ENCODE measurements at regions of chr11 and their contacts with region 1.

Region 1: GRCh38 chr11:64204464-64204989 is 2.0 kb upstream of the FERMT3 start:
- DNase-seq: peak; percentile 86 to 92
- ATAC-seq: peak; percentile 78 to 84 (median 80)
- H3K4me3 ChIP-seq: no peak overlapping the region
- H3K27ac ChIP-seq: peak overlapping the region; percentile 34
- H3K4me1 ChIP-seq: peaks cover 11% of the 10 kb centered on the region
- H3K27me3 ChIP-seq: no peaks in the 10 kb centered on the region
- CTCF ChIP-seq: peak; percentile 65

Region 2: DNA sequence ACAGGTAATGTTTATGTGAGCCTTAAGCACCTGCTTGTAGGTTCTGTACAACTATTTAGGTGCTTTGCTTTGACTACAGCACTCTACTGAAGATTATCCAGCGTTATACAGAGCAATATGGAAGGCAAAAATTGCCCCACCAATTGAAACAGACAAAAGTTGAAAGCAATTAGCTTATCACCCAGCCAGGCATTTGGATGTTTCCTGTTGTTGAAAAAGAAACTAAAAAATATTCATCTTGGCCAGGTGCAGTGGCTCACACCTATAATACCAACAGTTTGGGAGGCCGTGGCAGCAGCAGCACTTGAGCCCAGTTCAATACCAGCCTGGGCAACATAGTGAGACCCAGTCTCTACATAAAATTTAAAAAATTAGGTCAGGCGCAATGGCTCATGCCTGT is 551.9 kb before region 1 on chr11:
- intact Hi-C with region 1: no loop called
- DNase-seq: no peak
- ATAC-seq: no peak
- H3K4me3 ChIP-seq: no peak overlapping the region
- H3K27ac ChIP-seq: no peak overlapping the region
- H3K4me1 ChIP-seq: no peaks in the 10 kb centered on the region
- H3K27me3 ChIP-seq: no peaks in the 10 kb centered on the region
- CTCF ChIP-seq: no peak

Region 3: GRCh38 chr11:64058494-64058893 is 146.0 kb before region 1 on chr11:
- intact Hi-C with region 1: no loop called
- DNase-seq: no peak
- ATAC-seq: peak; percentile 41 to 74 (median 56)
- H3K4me3 ChIP-seq: no peak overlapping the region
- H3K27ac ChIP-seq: no peak overlapping the region
- H3K4me1 ChIP-seq: peaks cover 25% of the 10 kb centered on the region
- H3K27me3 ChIP-seq: no peaks in the 10 kb centered on the region
- CTCF ChIP-seq: no peak

Region 4: DNA sequence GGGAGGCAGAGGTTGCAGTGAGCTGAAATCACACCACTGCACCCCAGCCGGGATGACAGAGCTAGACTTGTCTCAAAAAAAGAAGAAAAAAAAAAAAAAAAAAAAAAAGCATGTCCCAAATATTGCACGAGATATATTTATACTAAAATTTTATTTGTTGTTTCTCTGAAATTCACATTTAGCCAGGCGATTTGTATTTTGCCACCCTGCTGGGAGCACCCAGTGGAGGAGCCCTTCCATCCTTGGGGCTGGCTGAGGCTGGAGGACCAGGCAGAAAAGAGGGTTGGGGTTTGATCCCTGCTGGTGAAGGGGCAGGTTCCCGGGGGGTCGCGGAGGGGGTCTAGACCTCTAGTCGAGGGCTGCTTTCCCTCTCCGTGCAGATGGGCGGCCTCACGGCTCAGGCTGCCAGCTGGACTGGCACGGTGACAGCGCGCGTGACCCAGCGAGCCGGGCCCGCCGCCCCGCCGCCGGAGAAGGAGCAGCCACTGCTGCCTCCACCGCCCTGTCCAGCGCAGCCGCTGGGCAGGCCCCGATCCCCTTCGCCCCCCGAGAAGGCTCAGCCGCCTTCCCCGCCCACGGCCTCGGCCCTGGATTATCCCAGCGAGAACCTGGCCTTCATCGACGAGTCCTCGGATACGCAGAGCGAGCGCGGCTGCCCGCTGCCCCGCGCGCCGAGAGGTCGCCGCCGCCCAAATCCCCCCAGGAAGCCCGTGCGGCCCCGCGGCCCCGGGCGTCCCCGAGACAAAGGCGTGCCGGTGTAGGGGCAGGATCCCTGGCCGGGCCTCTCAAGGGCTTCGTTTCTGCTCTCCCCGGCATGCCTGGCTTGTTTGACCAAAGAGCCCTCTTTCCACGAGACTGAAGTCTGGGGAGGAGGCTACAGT is 94.7 kb after region 1 on chr11:
- intact Hi-C with region 1: loop called (anchors 2 to 5 kb)
- DNase-seq: peak; percentile 73 to 86
- ATAC-seq: peak; percentile 38 to 78 (median 64)
- H3K4me3 ChIP-seq: peak overlapping the region; percentile 67
- H3K27ac ChIP-seq: no peak overlapping the region
- H3K4me1 ChIP-seq: peaks cover 29% of the 10 kb centered on the region
- H3K27me3 ChIP-seq: peaks cover 0 to 70% (median 25%) of the 10 kb centered on the region in 3 donors
- CTCF ChIP-seq: no peak

Measured in psoas muscle (tissue), 8 donors.